HAP-1 (cell line): ENCODE measurements at regions of chr10 and their contacts with region 1.

Region 1: GRCh38 chr10:97731346-97732051 is 5.4 kb upstream of the ZFYVE27 start:
- DNase-seq: peak; percentile 78 to 80
- H3K4me3 ChIP-seq: no peak overlapping the region
- H3K4me1 ChIP-seq: no peaks in the 10 kb centered on the region
- H3K27me3 ChIP-seq: no peaks in the 10 kb centered on the region

Region 2: DNA sequence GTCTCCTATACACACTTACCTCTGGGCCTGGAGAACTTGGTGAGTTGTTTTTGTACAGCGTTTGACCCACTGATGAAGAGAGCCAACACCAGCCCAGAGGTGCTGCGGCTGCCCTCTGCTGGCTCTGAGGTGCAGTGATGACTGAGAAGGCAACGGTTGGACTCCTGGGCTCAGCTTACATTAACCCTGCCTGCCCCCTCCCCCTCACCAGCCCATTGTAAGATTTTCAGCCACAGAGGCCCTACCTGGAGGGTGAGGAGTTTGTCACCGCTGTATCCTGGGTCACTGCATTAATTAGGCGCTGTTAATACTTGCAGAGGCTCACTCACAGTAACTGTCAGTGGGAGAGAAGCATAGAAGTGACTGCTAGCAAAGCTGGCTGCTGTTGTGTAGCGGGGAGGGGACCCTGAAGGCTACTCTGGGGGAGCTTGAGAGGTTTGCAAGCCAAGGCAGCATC is 177.9 kb before region 1 on chr10:
- in situ Hi-C with region 1: no loop called
- DNase-seq: peak; percentile 62 to 80
- H3K4me3 ChIP-seq: no peak overlapping the region
- H3K4me1 ChIP-seq: peaks cover 2% of the 10 kb centered on the region; the same call in 1 of the 2 replicates
- H3K27me3 ChIP-seq: no peaks in the 10 kb centered on the region

Region 3: GRCh38 chr10:97640174-97640867 is 91.2 kb before region 1 on chr10 and contains the start of gene PI4K2A:
- in situ Hi-C with region 1: no loop called
- DNase-seq: peak; percentile 99 to 100
- H3K4me3 ChIP-seq: peak within 1 kb of the TSS; percentile 66
- H3K4me1 ChIP-seq: peaks cover 6% of the 10 kb centered on the region; the same call in 1 of the 2 replicates
- H3K27me3 ChIP-seq: 0 out of 2 replicates have a peak, but pooled peaks cover 3% of the 10 kb centered on the region

Region 4: GRCh38 chr10:97676770-97677581 is 54.5 kb before region 1 on chr10:
- in situ Hi-C with region 1: loop called (anchors 5 kb)
- DNase-seq: peak; percentile 55 to 58
- H3K4me3 ChIP-seq: no peak overlapping the region
- H3K4me1 ChIP-seq: no peaks in the 10 kb centered on the region
- H3K27me3 ChIP-seq: no peaks in the 10 kb centered on the region